Mammary epithelial cell (primary cell): ENCODE measurements at regions of chr2 and their contacts with region 1.

Region 1: DNA sequence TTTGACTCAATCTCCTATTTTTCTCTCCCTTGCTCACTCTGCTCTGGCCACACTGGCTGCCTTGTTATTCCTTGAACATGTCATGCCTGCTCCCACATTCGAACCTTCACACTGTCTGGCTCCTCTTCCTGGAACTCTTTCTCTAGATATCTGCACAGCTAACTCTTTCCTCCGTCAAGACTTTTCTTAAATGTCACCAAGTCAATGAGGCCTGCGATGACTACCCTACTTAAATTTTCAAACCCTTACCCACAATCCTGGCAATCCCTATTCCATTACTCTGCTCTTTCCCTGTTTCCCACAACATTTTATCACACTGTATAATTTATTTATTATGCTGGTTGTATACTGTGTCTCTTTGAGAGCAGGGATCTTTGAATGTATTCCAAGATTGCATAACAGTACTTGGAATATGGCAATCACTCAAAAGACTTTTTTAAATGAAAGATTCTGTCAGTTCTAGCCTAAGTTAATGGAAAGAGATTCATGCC is 206.2 kb downstream of the SRBD1 start:
- DNase-seq: no peak
- H3K4me3 ChIP-seq: no peak overlapping the region
- H3K27ac ChIP-seq: no peak overlapping the region
- H3K4me1 ChIP-seq: no peaks in the 10 kb centered on the region
- H3K27me3 ChIP-seq: no peaks in the 10 kb centered on the region
- CTCF ChIP-seq: no peak

Region 2: GRCh38 chr2:45458909-45459563 is 54.2 kb after region 1 on chr2:
- CTCF ChIA-PET with region 1: no interaction called
- dilution Hi-C with region 1: loop called (anchors 5 kb)
- in situ Hi-C with region 1: no loop called
- intact Hi-C with region 1: no loop called
- DNase-seq: peak; percentile 60
- H3K4me3 ChIP-seq: no peak overlapping the region
- H3K27ac ChIP-seq: no peak overlapping the region
- H3K4me1 ChIP-seq: peaks cover 7% of the 10 kb centered on the region
- H3K27me3 ChIP-seq: no peaks in the 10 kb centered on the region
- CTCF ChIP-seq: no peak